Activated CD4-positive, alpha-beta memory T cell treated with anti-CD3 and anti-CD28 coated beads for 36 hours (primary cell): ENCODE measurements at regions of chr4 and their contacts with region 1.

Region 1: GRCh38 chr4:6855692-6856297 is 53.8 kb upstream of the TBC1D14 start:
- DNase-seq: peak; percentile 59
- H3K4me3 Mint-ChIP-seq: peak overlapping the region; percentile 36
- H3K27ac Mint-ChIP-seq: peak overlapping the region; percentile 90
- H3K4me1 Mint-ChIP-seq: peaks cover 35% of the 10 kb centered on the region
- H3K27me3 Mint-ChIP-seq: no peaks in the 10 kb centered on the region

Region 2: GRCh38 chr4:6783053-6783981 is 72.5 kb before region 1 on chr4:
- CTCF ChIA-PET with region 1: no interaction called
- POLR2A ChIA-PET with region 1: no interaction called
- intact Hi-C with region 1: loop called (anchors 2 kb)
- DNase-seq: peak; percentile 94
- H3K4me3 Mint-ChIP-seq: peak overlapping the region; percentile 80
- H3K27ac Mint-ChIP-seq: peak overlapping the region; percentile 77
- H3K4me1 Mint-ChIP-seq: peaks cover 47% of the 10 kb centered on the region
- H3K27me3 Mint-ChIP-seq: no peaks in the 10 kb centered on the region

Region 3: DNA sequence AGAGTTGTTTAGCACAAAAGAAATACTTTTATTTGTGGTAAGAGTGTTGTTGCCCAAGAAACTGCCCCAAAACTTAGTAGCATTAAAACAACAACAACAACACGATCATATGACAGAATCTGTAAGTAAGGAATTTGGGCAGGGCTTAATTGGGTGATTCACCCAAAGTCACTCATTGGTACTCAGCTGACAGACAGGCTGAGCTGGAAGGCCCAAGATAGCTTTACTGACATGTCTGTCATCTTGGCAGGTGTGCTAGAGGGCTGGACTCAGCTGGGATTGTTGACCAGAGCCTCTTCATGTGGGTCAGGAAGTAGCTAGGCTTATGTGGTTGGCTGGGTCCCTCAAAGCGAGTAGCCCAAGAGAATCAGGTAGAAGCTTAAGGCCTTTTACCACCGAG is 20.9 kb before region 1 on chr4:
- CTCF ChIA-PET with region 1: no interaction called
- POLR2A ChIA-PET with region 1: no interaction called
- intact Hi-C with region 1: no loop called
- DNase-seq: no peak
- H3K4me3 Mint-ChIP-seq: no peak overlapping the region
- H3K27ac Mint-ChIP-seq: no peak overlapping the region
- H3K4me1 Mint-ChIP-seq: peaks cover 4% of the 10 kb centered on the region
- H3K27me3 Mint-ChIP-seq: no peaks in the 10 kb centered on the region

Region 4: GRCh38 chr4:6898763-6899162 is 43.0 kb after region 1 on chr4:
- CTCF ChIA-PET with region 1: interaction called, 3 read pairs
- POLR2A ChIA-PET with region 1: no interaction called
- intact Hi-C with region 1: loop called (anchors 1 kb)
- DNase-seq: no peak
- H3K4me3 Mint-ChIP-seq: no peak overlapping the region
- H3K27ac Mint-ChIP-seq: peak overlapping the region; percentile 82
- H3K4me1 Mint-ChIP-seq: peaks cover 29% of the 10 kb centered on the region
- H3K27me3 Mint-ChIP-seq: no peaks in the 10 kb centered on the region